Endothelial cell of umbilical vein (primary cell): ENCODE measurements at regions of chr2 and their contacts with region 1.

Region 1: DNA sequence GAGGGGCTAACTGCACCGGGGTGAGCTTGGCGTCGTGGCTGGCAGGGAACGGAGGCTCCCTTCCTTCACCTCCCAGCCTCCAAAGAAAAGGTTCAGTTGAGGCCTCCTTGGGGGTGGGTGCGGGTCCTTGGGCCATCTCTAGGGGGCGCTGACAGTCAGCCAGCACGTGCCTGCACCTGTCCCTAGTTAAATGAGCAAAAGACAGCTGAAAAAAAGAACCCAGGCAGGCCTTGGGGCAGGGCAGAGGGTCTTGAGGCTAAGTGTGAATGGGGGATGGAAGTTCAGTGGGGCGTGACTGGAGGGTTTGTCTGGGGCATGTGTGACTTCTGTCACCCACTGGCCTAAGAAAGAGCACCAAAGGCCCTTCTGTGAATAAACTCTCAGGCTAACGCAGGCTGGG is 56.4 kb downstream of the ZFP36L2 start:
- DNase-seq: peak; percentile 59
- H3K4me3 ChIP-seq: no peak overlapping the region
- H3K27ac ChIP-seq: peak overlapping the region; percentile 88
- H3K4me1 ChIP-seq: peaks cover 47% of the 10 kb centered on the region
- H3K27me3 ChIP-seq: no peaks in the 10 kb centered on the region
- CTCF ChIP-seq: peak; percentile 76 to 78
- POLR2A ChIP-seq: no peak

Region 2: GRCh38 chr2:42828487-42829425 is 341.2 kb before region 1 on chr2:
- CTCF ChIA-PET with region 1: interaction called, 4 read pairs
- POLR2A ChIA-PET with region 1: no interaction called
- dilution Hi-C with region 1: no loop called
- intact Hi-C with region 1: loop called (anchors 2 kb)
- DNase-seq: peak; percentile 66
- H3K4me3 ChIP-seq: no peak overlapping the region
- H3K27ac ChIP-seq: no peak overlapping the region
- H3K4me1 ChIP-seq: no peaks in the 10 kb centered on the region
- H3K27me3 ChIP-seq: no peaks in the 10 kb centered on the region
- CTCF ChIP-seq: peak; percentile 91 to 93
- POLR2A ChIP-seq: no peak

Region 3: DNA sequence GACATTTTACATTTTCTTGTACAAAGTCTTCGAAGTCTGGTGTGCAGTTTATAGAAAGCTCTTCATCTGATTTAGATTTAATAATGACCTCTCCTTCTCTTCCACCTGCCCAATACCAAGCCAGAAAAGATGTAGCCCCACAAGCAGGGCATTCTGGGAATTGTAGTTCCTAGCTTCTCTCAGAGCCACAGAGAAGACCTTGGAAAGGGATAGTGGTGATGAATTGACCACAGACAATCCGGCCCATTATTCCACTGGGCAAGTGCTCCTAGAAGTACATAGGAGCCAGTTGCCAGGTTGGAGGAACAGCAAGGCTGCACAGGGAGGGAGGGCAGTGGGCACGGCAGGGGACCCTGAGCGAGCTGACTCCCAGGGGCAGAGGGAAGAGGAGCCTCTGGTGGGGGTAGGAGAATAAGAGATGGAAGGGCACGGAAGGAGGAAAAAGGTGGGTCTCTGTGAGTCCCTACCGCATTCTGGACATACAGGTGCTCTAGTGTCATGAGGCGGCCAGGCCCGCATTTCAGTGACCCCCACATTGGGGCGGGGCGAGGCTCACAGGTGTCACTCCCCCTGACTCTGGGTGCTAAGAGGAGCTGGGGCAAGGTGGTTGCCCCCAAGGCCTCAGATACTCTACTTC is 225.1 kb before region 1 on chr2:
- CTCF ChIA-PET with region 1: interaction called, 6 read pairs
- POLR2A ChIA-PET with region 1: no interaction called
- dilution Hi-C with region 1: no loop called
- intact Hi-C with region 1: loop called (anchors 1 kb)
- DNase-seq: no peak
- H3K4me3 ChIP-seq: no peak overlapping the region
- H3K27ac ChIP-seq: no peak overlapping the region
- H3K4me1 ChIP-seq: no peaks in the 10 kb centered on the region
- H3K27me3 ChIP-seq: no peaks in the 10 kb centered on the region
- CTCF ChIP-seq: no peak
- POLR2A ChIP-seq: no peak

Region 4: GRCh38 chr2:43086451-43087221 is 83.4 kb before region 1 on chr2:
- CTCF ChIA-PET with region 1: interaction called, 3 read pairs
- POLR2A ChIA-PET with region 1: no interaction called
- dilution Hi-C with region 1: no loop called
- intact Hi-C with region 1: loop called (anchors 1 kb)
- DNase-seq: peak; percentile 96
- H3K4me3 ChIP-seq: no peak overlapping the region
- H3K27ac ChIP-seq: peak overlapping the region; percentile 87
- H3K4me1 ChIP-seq: peaks cover 44% of the 10 kb centered on the region
- H3K27me3 ChIP-seq: no peaks in the 10 kb centered on the region
- CTCF ChIP-seq: no peak
- POLR2A ChIP-seq: peak; percentile 17

Region 5: GRCh38 chr2:43219383-43220228 is 49.6 kb after region 1 on chr2:
- CTCF ChIA-PET with region 1: interaction called, 71 read pairs
- POLR2A ChIA-PET with region 1: interaction called, 12 read pairs
- dilution Hi-C with region 1: loop called (anchors 10 kb)
- intact Hi-C with region 1: loop called (anchors 1 kb)
- DNase-seq: peak; percentile 84
- H3K4me3 ChIP-seq: peak overlapping the region in 2 of 3 experiments; percentile 0 to 37
- H3K27ac ChIP-seq: peak overlapping the region; percentile 88
- H3K4me1 ChIP-seq: peaks cover 54% of the 10 kb centered on the region
- H3K27me3 ChIP-seq: no peaks in the 10 kb centered on the region
- CTCF ChIP-seq: no peak
- POLR2A ChIP-seq: peak; percentile 62

Region 6: DNA sequence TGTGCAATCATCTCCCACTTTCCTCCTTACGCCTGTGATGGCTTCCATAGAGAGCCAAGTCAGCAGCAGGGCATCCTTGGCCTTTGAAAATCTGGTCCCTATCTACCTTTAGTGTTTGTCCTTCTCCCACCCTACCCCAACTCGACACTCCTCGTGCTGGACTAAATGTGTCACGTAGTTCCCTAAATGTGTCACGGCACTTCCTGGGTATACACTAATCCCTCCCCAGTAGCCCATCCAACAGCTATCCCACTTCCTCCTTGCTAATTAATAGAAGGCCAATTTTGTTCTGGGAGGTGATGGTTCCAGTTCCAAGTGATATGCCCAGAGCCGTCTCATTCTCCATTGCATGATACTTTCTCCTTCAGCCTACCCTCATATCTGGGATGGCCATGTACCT is 93.0 kb after region 1 on chr2:
- CTCF ChIA-PET with region 1: no interaction called
- POLR2A ChIA-PET with region 1: no interaction called
- dilution Hi-C with region 1: no loop called
- intact Hi-C with region 1: no loop called
- DNase-seq: no peak
- H3K4me3 ChIP-seq: no peak overlapping the region
- H3K27ac ChIP-seq: no peak overlapping the region
- H3K4me1 ChIP-seq: no peaks in the 10 kb centered on the region
- H3K27me3 ChIP-seq: no peaks in the 10 kb centered on the region
- CTCF ChIP-seq: no peak
- POLR2A ChIP-seq: no peak